ENCODE measurements at regions of chr15 and their contacts with region 1.

Region 1: GRCh38 chr15:48785195-48785594 is 25.7 kb downstream of the CEP152 start:
- DNase-seq: no peak
- H3K4me3 ChIP-seq: no peak overlapping the region
- H3K27ac ChIP-seq: no peak overlapping the region
- H3K4me1 ChIP-seq: no peaks in the 10 kb centered on the region
- H3K27me3 ChIP-seq: no peaks in the 10 kb centered on the region
- CTCF ChIP-seq: no peak

Region 2: GRCh38 chr15:48202068-48202467 is 583.1 kb before region 1 on chr15:
- CTCF ChIA-PET with region 1: no interaction called
- POLR2A ChIA-PET with region 1: interaction called, 15 read pairs
- intact Hi-C with region 1: no loop called
- DNase-seq: no peak
- H3K4me3 ChIP-seq: no peak overlapping the region
- H3K27ac ChIP-seq: no peak overlapping the region
- H3K4me1 ChIP-seq: no peaks in the 10 kb centered on the region
- H3K27me3 ChIP-seq: no peaks in the 10 kb centered on the region
- CTCF ChIP-seq: no peak